Breast epithelium (tissue), 4 donors: ENCODE measurements at regions of chr1 and their contacts with region 1.

Region 1: GRCh38 chr1:77671836-77672235 is 10.6 kb downstream of the ZZZ3 start:
- DNase-seq: no peak
- H3K4me3 ChIP-seq: no peak overlapping the region
- H3K27ac ChIP-seq: no peak overlapping the region
- H3K4me1 ChIP-seq: peaks cover 0 to 7% of the 10 kb centered on the region in 2 donors
- H3K27me3 ChIP-seq: no peaks in the 10 kb centered on the region
- CTCF ChIP-seq: no peak
- POLR2A ChIP-seq: no peak

Region 2: GRCh38 chr1:76317299-76317900 is 1354.4 kb before region 1 on chr1:
- intact Hi-C with region 1: loop called (anchors 10 kb)
- DNase-seq: no peak
- H3K4me3 ChIP-seq: no peak overlapping the region
- H3K27ac ChIP-seq: no peak overlapping the region
- H3K4me1 ChIP-seq: no peaks in the 10 kb centered on the region
- H3K27me3 ChIP-seq: no peaks in the 10 kb centered on the region
- CTCF ChIP-seq: no peak
- POLR2A ChIP-seq: no peak

Region 3: GRCh38 chr1:77683160-77684148 is 11.6 kb after region 1 on chr1:
- intact Hi-C with region 1: no loop called
- DNase-seq: peak; percentile 88 to 90
- H3K4me3 ChIP-seq: peak overlapping the region; percentile 76 to 88 (median 81)
- H3K27ac ChIP-seq: peak overlapping the region; percentile 96 to 97
- H3K4me1 ChIP-seq: no peaks in the 10 kb centered on the region
- H3K27me3 ChIP-seq: no peaks in the 10 kb centered on the region
- CTCF ChIP-seq: peak; percentile 74 to 95 (median 93)
- POLR2A ChIP-seq: no peak